ENCODE measurements at regions of chr17 and their contacts with region 1.

Region 1: GRCh38 chr17:34361478-34362061 is 1.5 kb downstream of the CCL1 start:
- DNase-seq: peak; percentile 95
- H3K4me3 Mint-ChIP-seq: peak overlapping the region; percentile 56
- H3K27ac Mint-ChIP-seq: peak overlapping the region; percentile 6
- H3K4me1 Mint-ChIP-seq: peaks cover 44% of the 10 kb centered on the region
- H3K27me3 Mint-ChIP-seq: peaks cover 22% of the 10 kb centered on the region

Region 2: DNA sequence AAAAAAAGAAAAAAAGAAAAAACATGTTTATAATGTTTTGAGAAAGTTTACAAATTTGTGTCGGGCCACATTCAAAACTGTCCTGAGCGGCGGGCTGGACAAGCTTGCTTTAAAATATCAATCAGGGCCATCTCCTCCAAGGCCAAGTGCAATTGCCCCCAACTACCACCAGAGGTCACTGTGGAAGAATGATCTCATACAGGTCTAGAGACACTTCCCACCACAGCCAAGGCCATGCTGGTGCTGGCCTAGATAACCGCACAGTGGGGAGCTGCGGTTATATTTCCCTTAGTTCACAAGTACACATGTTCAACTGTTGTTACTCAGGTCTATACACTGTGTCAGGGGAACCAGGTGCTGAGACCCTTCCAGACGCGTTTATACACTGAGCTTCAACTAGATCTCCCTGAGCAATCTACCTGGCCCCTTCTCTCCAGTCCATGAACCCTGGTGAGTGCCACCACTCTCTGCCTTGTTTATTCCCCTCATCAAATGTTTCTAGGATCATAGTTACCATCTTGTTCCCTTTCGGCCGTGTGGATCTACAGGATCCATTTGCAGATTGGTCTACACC is 190.2 kb before region 1 on chr17:
- intact Hi-C with region 1: loop called (anchors 1 kb)
- DNase-seq: peak; percentile 87
- H3K4me3 Mint-ChIP-seq: no peak overlapping the region
- H3K27ac Mint-ChIP-seq: no peak overlapping the region
- H3K4me1 Mint-ChIP-seq: no peaks in the 10 kb centered on the region
- H3K27me3 Mint-ChIP-seq: peaks cover 12% of the 10 kb centered on the region

Region 3: GRCh38 chr17:34291721-34292348 is 69.7 kb before region 1 on chr17:
- intact Hi-C with region 1: no loop called
- DNase-seq: no peak
- H3K4me3 Mint-ChIP-seq: no peak overlapping the region
- H3K27ac Mint-ChIP-seq: no peak overlapping the region
- H3K4me1 Mint-ChIP-seq: no peaks in the 10 kb centered on the region
- H3K27me3 Mint-ChIP-seq: peaks cover 14% of the 10 kb centered on the region

Region 4: GRCh38 chr17:34306466-34306865 is 55.1 kb before region 1 on chr17:
- intact Hi-C with region 1: loop called (anchors 5 kb)
- DNase-seq: peak; percentile 36
- H3K4me3 Mint-ChIP-seq: no peak overlapping the region
- H3K27ac Mint-ChIP-seq: no peak overlapping the region
- H3K4me1 Mint-ChIP-seq: peaks cover 35% of the 10 kb centered on the region
- H3K27me3 Mint-ChIP-seq: peaks cover 13% of the 10 kb centered on the region

Region 5: DNA sequence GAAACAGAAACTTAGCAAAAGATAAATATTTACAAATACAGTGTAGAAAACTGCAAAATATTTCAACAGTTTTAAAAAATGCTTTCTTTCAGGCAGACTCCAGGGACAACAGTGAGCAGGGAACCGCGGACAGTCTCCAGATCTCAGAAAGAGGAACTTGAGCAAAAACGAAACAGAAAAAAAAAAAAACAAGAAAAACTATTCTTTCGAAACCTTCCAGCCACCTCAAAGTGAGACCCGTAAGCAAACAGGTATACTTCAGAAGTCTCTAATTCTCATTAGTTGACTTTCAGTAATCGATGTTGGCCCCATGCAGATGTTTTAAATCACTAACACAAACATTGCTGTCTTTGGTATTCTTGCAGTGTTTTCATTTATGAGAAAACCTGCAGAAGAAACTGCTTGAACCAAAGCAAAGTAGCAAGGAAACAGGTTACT is 17.1 kb after region 1 on chr17:
- intact Hi-C with region 1: loop called (anchors 2 kb)
- DNase-seq: peak; percentile 79
- H3K4me3 Mint-ChIP-seq: peak overlapping the region; percentile 71
- H3K27ac Mint-ChIP-seq: peak overlapping the region; percentile 59
- H3K4me1 Mint-ChIP-seq: peaks cover 64% of the 10 kb centered on the region
- H3K27me3 Mint-ChIP-seq: peaks cover 4% of the 10 kb centered on the region

Measured in activated CD4-positive, alpha-beta T cell treated with anti-CD3 and anti-CD28 coated beads, Interleukin-2, amount 10 ng/mL, durations not matched to agents 24 days and 14 days (primary cell).